ENCODE measurements at regions of chr3 and their contacts with region 1.

Region 1: GRCh38 chr3:120795017-120795648 is 52.6 kb downstream of the GTF2E1 start:
- H3K4me3 ChIP-seq: no peak overlapping the region
- H3K27ac ChIP-seq: no peak overlapping the region
- H3K4me1 ChIP-seq: no peaks in the 10 kb centered on the region
- CTCF ChIP-seq: no peak

Region 2: DNA sequence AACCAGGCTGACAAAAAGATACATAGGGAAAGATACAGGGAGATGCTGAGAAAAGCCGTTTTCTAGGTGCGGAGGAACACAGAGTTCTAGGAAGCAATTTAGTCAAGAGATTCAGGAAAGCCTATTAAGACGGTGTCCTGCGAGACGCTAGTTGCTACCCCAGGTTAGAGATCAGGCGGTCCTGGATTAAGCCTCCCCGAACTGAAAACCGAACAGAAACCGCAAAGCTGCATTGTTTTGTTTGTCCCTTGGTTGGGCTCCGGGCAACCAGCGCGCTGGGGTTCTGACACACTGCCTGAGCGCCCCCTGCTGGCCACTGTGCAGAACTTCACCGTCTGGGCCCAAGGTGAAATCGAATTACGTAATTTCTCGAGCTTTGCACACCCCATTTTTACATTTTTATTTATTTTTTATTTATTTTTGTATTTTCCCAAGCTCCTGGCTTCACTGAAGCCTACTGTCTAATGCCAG is 236.3 kb before region 1 on chr3:
- CTCF ChIA-PET with region 1: interaction called, 64 read pairs
- POLR2A ChIA-PET with region 1: no interaction called
- H3K4me3 ChIP-seq: peak overlapping the region; percentile 43
- H3K27ac ChIP-seq: no peak overlapping the region
- H3K4me1 ChIP-seq: no peaks in the 10 kb centered on the region
- CTCF ChIP-seq: peak; percentile 65; the same call in 1 of the 2 replicates

Region 3: DNA sequence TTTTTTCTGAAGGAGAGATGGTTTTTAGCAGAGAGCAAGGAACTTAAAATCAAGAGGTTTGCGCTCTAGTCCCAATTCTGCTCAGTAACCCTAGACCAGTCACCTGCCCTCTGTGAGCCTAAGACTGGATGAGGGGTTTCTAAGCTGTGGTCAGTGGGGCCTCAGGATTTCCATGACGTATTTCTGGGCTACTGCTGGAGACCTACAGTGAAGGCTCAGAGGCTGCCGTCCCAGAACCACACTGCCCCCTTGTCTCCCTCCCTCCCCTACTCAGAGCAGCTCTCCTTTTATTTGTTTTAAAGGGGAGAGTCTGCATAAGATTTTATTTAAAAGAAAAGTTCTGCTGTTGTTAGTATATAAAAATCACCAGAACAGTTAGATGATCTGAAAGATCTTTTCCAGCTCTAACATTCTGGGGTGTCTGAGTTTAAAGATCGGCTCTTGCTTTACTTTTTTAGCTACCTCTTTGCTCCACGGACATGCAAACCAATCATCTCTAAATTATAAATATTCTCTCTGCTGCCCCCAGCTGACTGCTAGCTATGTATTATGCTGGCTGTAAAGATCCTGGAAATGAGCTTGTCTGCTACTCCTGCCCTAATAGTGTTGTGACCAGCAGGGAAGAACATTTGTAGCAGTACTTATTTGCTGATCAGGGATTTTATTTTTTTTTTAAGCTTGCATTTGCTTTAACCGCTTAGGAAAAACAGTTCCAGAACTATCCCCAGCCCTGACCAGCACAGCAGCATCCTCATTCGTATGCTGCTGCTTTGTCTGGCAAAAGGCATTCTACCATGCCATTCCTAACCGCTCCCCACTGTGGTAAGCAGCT is 227.5 kb before region 1 on chr3:
- CTCF ChIA-PET with region 1: interaction called, 19 read pairs
- POLR2A ChIA-PET with region 1: no interaction called
- H3K4me3 ChIP-seq: peak overlapping the region; percentile 1; the same call in 1 of the 2 replicates
- H3K27ac ChIP-seq: no peak overlapping the region
- H3K4me1 ChIP-seq: no peaks in the 10 kb centered on the region
- CTCF ChIP-seq: peak; percentile 12; the same call in 1 of the 2 replicates

Region 4: DNA sequence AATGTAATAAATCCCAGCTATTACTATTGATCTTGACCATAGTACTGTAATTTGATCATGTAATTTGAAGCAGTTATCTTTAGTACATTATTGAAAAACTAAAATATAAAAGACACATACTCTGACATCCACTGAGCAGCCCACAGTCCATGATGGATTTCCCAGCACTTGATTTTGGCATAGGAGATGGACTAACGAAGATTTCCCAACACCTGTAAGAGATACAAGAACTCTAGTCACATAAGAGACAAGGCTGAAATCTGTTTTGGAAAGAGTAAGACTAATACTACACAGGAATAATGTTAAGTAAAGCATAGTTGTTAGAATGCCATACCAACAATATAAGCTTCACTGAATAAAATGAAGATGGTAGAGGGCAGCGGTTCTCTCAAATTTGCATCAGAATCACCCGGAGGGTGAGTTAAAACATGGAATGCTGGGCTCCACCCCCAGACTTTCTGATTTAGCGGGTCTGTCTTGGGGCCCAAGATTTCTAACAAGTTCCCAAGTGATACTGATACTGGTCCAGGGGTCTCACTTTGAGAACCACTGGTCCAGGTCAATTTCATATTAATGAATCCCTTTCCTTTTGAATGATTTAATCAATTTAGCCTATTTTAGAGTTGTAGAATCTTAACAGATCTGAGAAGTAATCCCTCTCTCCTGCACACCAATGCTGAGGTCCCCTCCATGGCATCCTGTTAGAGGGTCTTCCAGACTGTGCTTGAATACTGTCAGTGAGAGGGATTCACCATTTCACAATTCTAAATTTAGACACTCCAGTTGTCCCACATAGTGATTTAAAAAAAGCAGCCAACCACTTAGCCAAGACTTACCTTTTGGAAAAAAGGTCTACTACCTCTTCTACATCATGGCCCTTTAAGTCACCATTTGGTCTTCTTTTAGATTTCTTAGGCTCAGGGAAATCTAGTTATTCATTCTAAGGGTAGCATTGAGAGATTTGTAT is 64.3 kb before region 1 on chr3:
- CTCF ChIA-PET with region 1: no interaction called
- POLR2A ChIA-PET with region 1: no interaction called
- H3K4me3 ChIP-seq: no peak overlapping the region
- H3K27ac ChIP-seq: no peak overlapping the region
- H3K4me1 ChIP-seq: no peaks in the 10 kb centered on the region
- CTCF ChIP-seq: no peak

Region 5: DNA sequence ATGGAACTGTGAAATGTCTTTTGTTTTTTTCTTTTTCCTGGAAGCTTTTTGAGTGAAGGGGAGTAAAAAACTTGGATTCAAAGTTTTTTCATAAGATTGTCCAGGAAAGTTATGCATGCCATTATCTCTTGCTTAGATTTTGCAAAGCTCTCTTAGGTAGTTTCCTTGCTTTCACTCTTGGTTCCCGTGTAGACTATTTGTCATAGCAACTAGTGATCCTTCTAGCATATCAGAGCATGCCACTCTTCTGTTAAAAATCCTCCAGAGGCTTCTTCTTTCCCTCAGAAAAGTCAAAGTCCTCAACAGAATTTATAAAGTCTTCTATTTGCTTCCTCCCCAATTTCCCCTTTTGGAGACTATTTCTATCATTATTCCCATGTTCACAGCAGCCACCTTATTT is 31.5 kb before region 1 on chr3:
- CTCF ChIA-PET with region 1: interaction called, 13 read pairs
- POLR2A ChIA-PET with region 1: no interaction called
- H3K4me3 ChIP-seq: no peak overlapping the region
- H3K27ac ChIP-seq: no peak overlapping the region
- H3K4me1 ChIP-seq: peaks cover 19% of the 10 kb centered on the region
- CTCF ChIP-seq: no peak

Region 6: GRCh38 chr3:120780977-120781376 is 14.2 kb before region 1 on chr3:
- CTCF ChIA-PET with region 1: interaction called, 11 read pairs
- POLR2A ChIA-PET with region 1: no interaction called
- H3K4me3 ChIP-seq: no peak overlapping the region
- H3K27ac ChIP-seq: no peak overlapping the region
- H3K4me1 ChIP-seq: no peaks in the 10 kb centered on the region
- CTCF ChIP-seq: no peak

Region 7: DNA sequence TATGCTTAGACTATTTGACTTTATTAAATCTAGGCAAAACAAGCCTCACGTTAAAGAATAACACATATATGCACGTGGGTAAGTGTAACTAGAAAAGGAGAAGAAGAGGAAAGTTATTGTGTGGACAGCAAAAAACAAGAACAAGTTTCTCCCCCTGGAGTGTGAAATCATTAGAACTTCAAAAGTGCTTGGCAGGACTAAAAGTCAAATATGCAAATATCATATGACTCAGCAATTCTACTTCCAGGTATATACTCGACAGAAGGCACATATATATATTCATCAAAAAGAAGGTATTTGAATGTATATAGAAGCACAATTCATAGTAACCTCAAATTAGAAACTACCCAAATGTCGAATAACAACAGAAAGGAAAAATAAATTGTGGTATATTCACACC is 44.0 kb after region 1 on chr3:
- CTCF ChIA-PET with region 1: no interaction called
- POLR2A ChIA-PET with region 1: no interaction called
- H3K4me3 ChIP-seq: no peak overlapping the region
- H3K27ac ChIP-seq: no peak overlapping the region
- H3K4me1 ChIP-seq: no peaks in the 10 kb centered on the region
- CTCF ChIP-seq: no peak